ENCODE measurements at regions of chr1 and their contacts with region 1.

Region 1: DNA sequence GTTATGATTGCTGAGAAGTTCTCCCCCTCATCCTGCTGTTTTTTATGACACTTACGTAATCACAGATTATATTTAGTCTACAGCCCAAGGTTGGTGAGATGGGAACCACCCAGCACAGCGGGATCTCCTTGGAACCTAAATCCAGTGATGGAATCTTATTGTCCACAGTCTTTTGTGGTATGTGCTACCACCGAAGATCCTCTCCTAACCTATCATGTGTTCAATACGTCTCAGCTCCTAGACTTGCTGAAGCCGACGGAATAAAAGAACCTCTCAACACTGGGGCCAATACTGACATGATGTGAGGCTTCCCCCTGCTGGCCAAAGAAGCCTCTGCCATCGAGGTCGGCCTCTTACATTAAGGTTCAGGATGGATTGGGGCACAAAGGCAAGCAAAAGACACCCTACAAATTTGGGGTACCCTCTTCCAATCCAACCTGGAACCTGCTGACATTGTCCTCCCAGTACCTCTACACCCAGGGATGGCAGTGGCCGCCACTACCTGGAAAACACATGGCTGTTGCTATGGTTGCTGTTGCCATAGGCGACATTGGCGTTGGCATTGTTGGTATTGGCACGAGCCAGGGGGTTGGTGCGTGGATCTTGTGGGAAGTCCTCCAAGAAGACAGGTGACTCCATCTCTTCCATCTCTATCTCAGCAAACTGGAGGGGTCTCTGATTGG is 19.4 kb upstream of the KIF21B start:
- DNase-seq: peak; percentile 48 to 79 (median 58)
- H3K4me3 ChIP-seq: no peak overlapping the region
- H3K4me3 Mint-ChIP-seq: no peak overlapping the region
- H3K27ac ChIP-seq: no peak overlapping the region
- H3K27ac Mint-ChIP-seq: peak overlapping the region in 2 of 8 donors; percentile 29 to 51
- H3K4me1 ChIP-seq: no peaks in the 10 kb centered on the region
- H3K4me1 Mint-ChIP-seq: peaks cover 3 to 5% (median 4%) of the 10 kb centered on the region in 3 donors
- H3K27me3 ChIP-seq: no peaks in the 10 kb centered on the region
- H3K27me3 Mint-ChIP-seq: peaks cover 0 to 2% of the 10 kb centered on the region in 2 donors

Region 2: DNA sequence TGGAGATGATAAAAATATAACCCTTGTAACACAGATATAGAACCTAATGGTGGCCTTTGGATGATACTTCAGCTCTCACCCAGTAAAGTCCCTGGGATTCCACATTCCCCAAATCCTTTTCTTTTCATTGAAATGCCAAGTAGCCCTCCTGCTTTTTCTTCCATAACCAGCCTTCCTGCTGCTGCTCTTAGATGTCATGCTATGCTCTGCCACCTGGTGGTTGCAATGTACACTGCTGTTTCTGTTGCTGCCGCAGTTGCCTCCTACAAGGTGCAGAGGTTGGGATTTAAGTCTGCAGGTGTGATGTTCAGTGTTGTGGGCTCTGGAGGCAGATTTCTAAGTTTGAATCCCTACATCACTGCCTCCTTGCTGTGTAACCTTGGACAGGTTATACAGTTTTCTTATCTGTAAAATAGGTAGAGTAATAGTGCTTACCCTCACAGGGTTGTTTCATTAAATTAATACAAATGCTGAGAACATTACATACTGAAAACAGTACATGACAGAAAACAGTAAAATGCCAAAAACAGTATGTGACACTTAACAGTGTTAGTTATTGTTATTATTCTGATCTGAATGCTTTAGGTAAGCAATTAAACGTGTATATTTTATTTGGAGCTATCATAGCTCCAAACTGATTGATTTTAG is 239.9 kb before region 1 on chr1:
- CTCF ChIA-PET with region 1: no interaction called
- POLR2A ChIA-PET with region 1: no interaction called
- DNase-seq: peak; percentile 49 to 74 (median 62)
- H3K4me3 ChIP-seq: no peak overlapping the region
- H3K4me3 Mint-ChIP-seq: no peak overlapping the region
- H3K27ac ChIP-seq: no peak overlapping the region
- H3K27ac Mint-ChIP-seq: no peak overlapping the region
- H3K4me1 ChIP-seq: no peaks in the 10 kb centered on the region
- H3K4me1 Mint-ChIP-seq: peaks cover 0 to 4% (median 0%) of the 10 kb centered on the region in 3 donors
- H3K27me3 ChIP-seq: no peaks in the 10 kb centered on the region
- H3K27me3 Mint-ChIP-seq: peaks cover 4 to 10% of the 10 kb centered on the region in 2 donors

Region 3: GRCh38 chr1:201016211-201016651 is 26.7 kb before region 1 on chr1:
- CTCF ChIA-PET with region 1: interaction called, 15 read pairs
- POLR2A ChIA-PET with region 1: no interaction called
- DNase-seq: no peak
- H3K4me3 ChIP-seq: no peak overlapping the region
- H3K4me3 Mint-ChIP-seq: peak overlapping the region in 4 of 7 donors; percentile 10 to 83 (median 47)
- H3K27ac ChIP-seq: peak overlapping the region; percentile 20
- H3K27ac Mint-ChIP-seq: peak overlapping the region in 6 of 8 donors; percentile 71 to 90 (median 85)
- H3K4me1 ChIP-seq: peaks cover 99% of the 10 kb centered on the region
- H3K4me1 Mint-ChIP-seq: peaks cover 87 to 100% (median 95%) of the 10 kb centered on the region in 3 donors
- H3K27me3 ChIP-seq: no peaks in the 10 kb centered on the region
- H3K27me3 Mint-ChIP-seq: no peaks in the 10 kb centered on the region

Region 4: DNA sequence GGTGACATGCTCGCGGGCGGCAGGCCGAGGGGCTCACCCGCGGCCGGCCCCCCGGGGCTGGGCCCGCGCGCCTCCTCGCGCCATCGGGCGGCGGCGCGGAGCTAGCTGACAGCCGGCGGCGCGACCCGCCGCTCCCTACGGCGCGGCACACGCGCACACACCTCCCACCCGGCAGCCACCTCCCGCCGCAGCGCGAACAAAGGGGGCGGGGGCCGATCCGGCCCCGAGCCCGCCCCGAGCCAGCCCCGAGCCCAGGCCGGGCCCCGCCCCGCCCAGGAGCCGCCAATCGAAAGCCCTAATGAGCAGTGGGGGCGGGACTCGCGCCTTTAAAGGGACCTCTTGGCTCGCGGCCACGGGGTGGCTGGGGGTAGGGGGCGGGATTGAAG is 19.4 kb before region 1 on chr1 and contains the start of gene KIF21B:
- CTCF ChIA-PET with region 1: interaction called, 10 read pairs
- POLR2A ChIA-PET with region 1: no interaction called
- DNase-seq: peak; percentile 88 to 94 (median 91)
- H3K4me3 ChIP-seq: peak within 1 kb of the TSS; percentile 92
- H3K4me3 Mint-ChIP-seq: peak within 1 kb of the TSS; percentile 92 to 99 (median 97)
- H3K27ac ChIP-seq: peak within 1 kb of the TSS; percentile 73
- H3K27ac Mint-ChIP-seq: peak within 1 kb of the TSS; percentile 90 to 100 (median 96)
- H3K4me1 ChIP-seq: peaks cover 59% of the 10 kb centered on the region
- H3K4me1 Mint-ChIP-seq: peaks cover 53 to 78% (median 60%) of the 10 kb centered on the region in 3 donors
- H3K27me3 ChIP-seq: no peaks in the 10 kb centered on the region
- H3K27me3 Mint-ChIP-seq: peaks cover 0 to 2% of the 10 kb centered on the region in 2 donors
- total RNA-seq, gene KIF21B: 37.5 to 37.6 TPM

Region 5: DNA sequence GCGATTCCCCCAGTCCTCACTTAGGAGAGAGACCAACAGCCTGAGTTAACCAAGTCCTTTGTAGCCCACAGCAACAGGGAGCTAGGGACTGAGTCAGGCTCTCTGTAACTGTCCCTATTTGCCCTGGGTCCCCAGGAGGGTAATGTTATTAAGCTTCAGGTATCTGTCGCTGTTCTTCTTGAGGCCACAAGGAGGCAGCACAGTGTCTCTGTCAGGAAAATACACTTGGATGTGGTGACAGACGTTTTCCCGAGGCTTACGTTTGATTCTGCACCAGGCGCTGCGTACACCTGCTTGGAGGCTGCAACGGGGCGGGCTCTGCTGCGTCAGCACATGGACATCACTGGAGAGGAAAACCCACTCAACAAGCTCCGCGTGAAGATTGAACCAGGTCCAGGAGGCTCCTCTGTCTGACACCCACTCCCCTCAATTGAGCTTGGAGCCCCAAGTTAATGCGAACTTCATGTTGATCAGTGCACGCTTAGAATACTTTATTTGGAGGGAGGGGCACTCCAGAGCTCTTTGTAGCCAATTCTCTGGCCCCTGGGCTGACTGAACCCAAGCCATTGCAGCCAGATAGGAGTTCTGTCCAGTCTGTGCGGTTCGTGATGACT is 956.8 kb after region 1 on chr1:
- CTCF ChIA-PET with region 1: no interaction called
- POLR2A ChIA-PET with region 1: no interaction called
- DNase-seq: peak in 1 of 5 donors; percentile 4
- H3K4me3 ChIP-seq: no peak overlapping the region
- H3K4me3 Mint-ChIP-seq: no peak overlapping the region
- H3K27ac ChIP-seq: no peak overlapping the region
- H3K27ac Mint-ChIP-seq: peak overlapping the region in 1 of 8 donors; percentile 58
- H3K4me1 ChIP-seq: no peaks in the 10 kb centered on the region
- H3K4me1 Mint-ChIP-seq: no peaks in the 10 kb centered on the region
- H3K27me3 ChIP-seq: no peaks in the 10 kb centered on the region
- H3K27me3 Mint-ChIP-seq: no peaks in the 10 kb centered on the region